Activated CD4-positive, alpha-beta memory T cell treated with anti-CD3 and anti-CD28 coated beads, Interleukin-2, amount 10 ng/mL, durations not matched to agents 7 days and 5 days (primary cell): ENCODE measurements at regions of chr10 and their contacts with region 1.

Region 1: GRCh38 chr10:69428165-69428564 is 11.4 kb upstream of the TACR2 start:
- DNase-seq: no peak
- H3K4me3 Mint-ChIP-seq: no peak overlapping the region
- H3K27ac Mint-ChIP-seq: no peak overlapping the region
- H3K4me1 Mint-ChIP-seq: peaks cover 42% of the 10 kb centered on the region
- H3K27me3 Mint-ChIP-seq: peaks cover 4% of the 10 kb centered on the region

Region 2: DNA sequence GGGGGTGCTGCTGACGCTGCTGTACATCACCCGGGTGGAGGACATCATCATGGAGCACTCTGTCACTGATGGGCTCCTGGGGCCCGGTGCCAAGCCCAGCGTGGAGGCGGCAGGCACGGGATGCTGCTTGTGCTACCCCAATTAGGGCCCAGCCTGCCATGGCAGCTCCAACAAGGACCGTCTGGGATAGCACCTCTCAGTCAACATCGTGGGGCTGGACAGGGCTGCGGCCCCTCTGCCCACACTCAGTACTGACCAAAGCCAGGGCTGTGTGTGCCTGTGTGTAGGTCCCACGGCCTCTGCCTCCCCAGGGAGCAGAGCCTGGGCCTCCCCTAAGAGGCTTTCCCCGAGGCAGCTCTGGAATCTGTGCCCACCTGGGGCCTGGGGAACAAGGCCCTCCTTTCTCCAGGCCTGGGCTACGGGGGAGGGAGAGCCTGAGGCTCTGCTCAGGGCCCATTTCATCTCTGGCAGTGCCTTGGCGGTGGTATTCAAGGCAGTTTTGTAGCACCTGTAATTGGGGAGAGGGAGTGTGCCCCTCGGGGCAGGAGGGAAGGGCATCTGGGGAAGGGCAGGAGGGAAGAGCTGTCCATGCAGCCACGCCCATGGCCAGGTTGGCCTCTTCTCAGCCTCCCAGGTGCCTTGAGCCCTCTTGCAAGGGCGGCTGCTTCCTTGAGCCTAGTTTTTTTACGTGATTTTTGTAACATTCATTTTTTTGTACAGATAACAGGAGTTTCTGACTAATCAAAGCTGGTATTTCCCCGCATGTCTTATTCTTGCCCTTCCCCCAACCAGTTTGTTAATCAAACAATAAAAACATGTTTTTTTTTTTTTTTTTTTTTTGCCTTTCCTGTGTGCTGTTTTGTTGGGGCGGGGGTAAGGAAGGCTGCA is 78.9 kb after region 1 on chr10:
- CTCF ChIA-PET with region 1: interaction called, 17 read pairs
- POLR2A ChIA-PET with region 1: interaction called, 3 read pairs
- DNase-seq: peak; percentile 18
- H3K4me3 Mint-ChIP-seq: peak overlapping the region; percentile 12
- H3K27ac Mint-ChIP-seq: peak overlapping the region; percentile 68
- H3K4me1 Mint-ChIP-seq: peaks cover 14% of the 10 kb centered on the region
- H3K27me3 Mint-ChIP-seq: peaks cover 20% of the 10 kb centered on the region